ENCODE measurements at regions of chrX and their contacts with region 1.

Region 1: DNA sequence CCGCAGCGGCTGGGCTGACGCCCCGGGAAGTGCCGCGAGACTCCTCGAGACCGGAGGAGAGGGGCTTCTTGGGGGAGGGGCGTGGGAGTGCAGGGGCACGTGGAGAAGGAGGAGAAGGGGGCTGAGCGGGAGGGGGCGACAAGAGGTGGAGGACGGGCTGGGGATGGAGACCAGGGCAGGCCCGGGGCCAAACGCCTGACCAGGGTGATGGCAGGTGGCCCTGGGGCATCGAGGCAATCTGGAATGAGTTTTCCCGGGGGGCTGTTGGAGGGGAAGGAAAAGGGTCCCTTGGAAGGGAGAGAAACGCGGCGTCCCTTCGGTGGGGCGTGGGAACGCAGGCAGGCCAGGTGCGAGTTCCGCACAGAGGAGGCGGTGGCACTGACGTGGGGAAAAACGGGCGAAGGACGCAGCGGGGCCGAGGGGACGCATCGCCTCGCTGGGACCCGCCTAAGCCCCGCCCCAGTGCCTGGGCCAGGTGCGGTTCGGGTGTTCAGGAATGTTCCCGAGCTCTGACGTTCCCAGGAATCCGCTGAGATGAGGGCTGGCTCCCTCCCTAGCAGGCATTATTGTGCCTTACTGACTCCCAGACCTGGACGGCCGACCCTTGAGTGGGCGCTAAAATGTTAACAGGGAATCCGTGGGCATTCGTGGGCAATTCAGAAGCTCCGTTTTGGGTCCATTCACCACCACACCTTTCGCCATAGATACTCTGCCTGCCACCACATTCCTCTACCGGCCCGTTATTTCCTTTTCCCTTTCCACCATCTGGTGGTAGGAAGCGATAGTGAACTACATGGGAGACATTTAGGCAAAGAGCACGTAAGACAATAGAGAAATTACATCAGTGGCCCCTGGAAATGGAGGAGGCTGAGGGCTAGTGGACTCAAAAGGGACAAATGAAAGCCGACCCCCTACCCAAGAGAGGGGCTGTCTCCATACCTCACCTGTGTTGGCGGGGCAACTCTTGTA is 795 bp upstream of the SH3KBP1 start:
- DNase-seq: peak; percentile 11
- H3K4me3 Mint-ChIP-seq: peak overlapping the region; percentile 78
- H3K27ac Mint-ChIP-seq: peak overlapping the region; percentile 70
- H3K4me1 Mint-ChIP-seq: peaks cover 25% of the 10 kb centered on the region
- H3K27me3 Mint-ChIP-seq: no peaks in the 10 kb centered on the region

Region 2: DNA sequence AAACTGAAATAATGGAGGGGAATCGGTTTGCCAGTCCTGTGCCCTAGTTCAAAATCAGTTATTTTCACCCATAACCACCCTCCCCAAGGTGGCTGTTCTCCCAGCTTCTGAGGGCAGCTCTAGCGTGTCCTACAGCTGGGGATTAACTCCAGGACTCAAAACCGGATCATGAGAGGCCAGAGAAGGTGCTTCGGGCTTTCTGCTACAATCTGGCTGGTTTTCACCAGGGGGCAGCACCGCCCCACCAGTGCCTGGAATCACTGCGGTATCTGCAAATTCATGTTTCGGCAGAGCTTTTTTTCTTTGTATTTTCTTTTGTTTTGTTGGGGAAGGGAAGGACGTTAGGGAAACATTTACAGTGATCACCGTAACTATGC is 516.0 kb before region 1 on chrX:
- intact Hi-C with region 1: loop called (anchors 5 kb)
- DNase-seq: peak; percentile 34
- H3K4me3 Mint-ChIP-seq: peak overlapping the region; percentile 87
- H3K27ac Mint-ChIP-seq: peak overlapping the region; percentile 85
- H3K4me1 Mint-ChIP-seq: peaks cover 9% of the 10 kb centered on the region
- H3K27me3 Mint-ChIP-seq: peaks cover 2% of the 10 kb centered on the region

Region 3: GRCh38 chrX:19593690-19594089 is 294.5 kb before region 1 on chrX:
- intact Hi-C with region 1: loop called (anchors 1 kb)
- DNase-seq: no peak
- H3K4me3 Mint-ChIP-seq: no peak overlapping the region
- H3K27ac Mint-ChIP-seq: no peak overlapping the region
- H3K4me1 Mint-ChIP-seq: peaks cover 5% of the 10 kb centered on the region
- H3K27me3 Mint-ChIP-seq: no peaks in the 10 kb centered on the region

Region 4: DNA sequence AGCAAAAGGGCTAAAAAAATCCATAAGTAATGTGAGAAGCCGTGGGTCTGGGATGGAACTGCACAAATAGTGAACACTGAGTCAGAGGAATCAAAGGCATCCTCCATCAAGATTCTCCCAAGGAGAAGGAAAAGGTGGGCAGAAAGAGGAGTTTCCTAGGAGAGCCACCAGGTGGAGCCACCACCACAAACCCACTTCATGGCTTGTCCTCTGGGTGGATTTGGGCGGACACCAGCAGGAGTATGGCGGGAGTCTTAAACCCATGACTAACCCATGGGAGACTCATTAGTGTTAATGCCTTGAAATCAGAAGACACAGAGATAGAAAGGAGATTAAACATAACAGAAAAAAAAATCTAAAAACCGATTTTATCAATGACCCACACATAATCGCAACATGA is 148.5 kb before region 1 on chrX:
- intact Hi-C with region 1: loop called (anchors 1 kb)
- DNase-seq: no peak
- H3K4me3 Mint-ChIP-seq: no peak overlapping the region
- H3K27ac Mint-ChIP-seq: peak overlapping the region; percentile 83
- H3K4me1 Mint-ChIP-seq: peaks cover 54% of the 10 kb centered on the region
- H3K27me3 Mint-ChIP-seq: no peaks in the 10 kb centered on the region

Region 5: DNA sequence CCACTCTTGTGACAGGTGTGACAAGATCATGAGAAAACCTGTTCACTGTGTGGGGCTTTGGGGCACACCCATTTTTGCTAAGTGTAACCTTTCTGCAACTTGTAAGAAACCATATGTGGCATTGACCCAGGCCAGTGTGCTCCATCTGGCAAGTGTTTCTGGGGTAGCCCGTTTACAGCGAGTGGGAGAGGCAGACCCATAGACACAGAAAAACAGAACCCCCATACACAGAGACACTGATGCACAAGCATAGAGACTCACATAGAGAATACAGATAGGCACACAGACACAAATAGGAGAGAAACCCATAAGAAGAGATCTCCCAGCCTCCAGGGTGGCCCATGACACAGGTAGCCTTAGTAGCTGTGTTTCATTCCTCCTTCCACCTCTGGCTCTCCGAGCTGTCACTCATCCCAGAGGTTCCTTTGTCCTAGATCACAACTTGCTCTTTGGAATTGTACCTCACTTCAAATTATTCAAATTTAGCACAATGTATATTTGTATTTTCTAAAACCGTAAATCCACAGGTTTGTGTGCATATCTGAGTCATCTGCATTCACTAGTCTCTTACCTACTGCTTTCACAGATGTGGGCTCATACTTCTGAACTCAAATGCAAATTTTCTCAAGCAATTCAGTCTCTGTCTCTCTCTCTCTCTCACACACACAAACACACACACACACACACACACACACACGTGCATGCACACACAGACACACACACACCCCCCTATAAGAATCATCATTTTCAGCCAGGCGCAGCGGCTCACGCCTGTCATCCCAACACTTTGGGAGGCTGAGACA is 115.2 kb before region 1 on chrX:
- intact Hi-C with region 1: loop called (anchors 2 kb)
- DNase-seq: no peak
- H3K4me3 Mint-ChIP-seq: peak overlapping the region; percentile 68
- H3K27ac Mint-ChIP-seq: peak overlapping the region; percentile 97
- H3K4me1 Mint-ChIP-seq: peaks cover 57% of the 10 kb centered on the region
- H3K27me3 Mint-ChIP-seq: no peaks in the 10 kb centered on the region

Region 6: DNA sequence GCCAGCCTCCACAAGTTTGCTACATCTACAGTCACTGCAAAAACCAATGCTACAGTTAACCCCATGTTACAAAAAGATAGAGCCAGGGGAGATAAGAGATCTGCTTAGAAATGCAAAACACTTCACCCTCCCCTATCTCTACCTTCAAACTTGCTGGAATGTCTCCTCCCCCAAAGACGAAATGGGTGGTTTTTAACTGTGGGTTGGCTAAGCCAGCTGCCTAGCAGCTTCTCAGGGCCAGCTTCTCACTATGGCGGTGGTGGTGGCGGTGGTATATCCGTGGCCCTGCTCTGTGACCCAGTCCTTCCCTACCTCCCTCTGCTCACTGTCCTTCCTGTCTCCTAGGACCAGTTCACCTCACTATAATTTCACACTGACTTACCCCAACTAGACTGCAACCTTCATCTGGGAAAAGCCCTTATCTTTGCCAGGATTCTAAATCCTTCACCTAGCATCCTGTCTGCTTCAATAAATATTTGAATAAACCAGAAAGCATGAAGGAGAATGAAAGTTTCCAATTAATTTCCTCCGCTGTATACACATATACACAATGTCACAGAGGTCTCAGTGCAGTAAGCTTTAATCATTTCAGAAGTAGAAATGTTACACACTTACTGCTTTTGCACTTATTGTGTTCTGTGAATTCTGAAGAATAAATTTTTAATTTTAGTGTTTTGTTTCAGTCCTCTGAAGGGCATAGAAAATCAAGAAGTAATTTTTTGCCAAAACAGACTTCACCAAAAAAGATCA is 47.1 kb before region 1 on chrX:
- intact Hi-C with region 1: loop called (anchors 1 kb)
- DNase-seq: peak; percentile 37
- H3K4me3 Mint-ChIP-seq: peak overlapping the region; percentile 41
- H3K27ac Mint-ChIP-seq: peak overlapping the region; percentile 85
- H3K4me1 Mint-ChIP-seq: peaks cover 41% of the 10 kb centered on the region
- H3K27me3 Mint-ChIP-seq: no peaks in the 10 kb centered on the region

Measured in activated T-helper 1 cell treated with anti-CD3 and anti-CD28 coated beads, Interleukin-12 subunit alpha, Interleukin-12 subunit beta, Interleukin-2, Interleukin-4 antibody, amounts not matched to agents 30 ng/mL and 10 ng/mL and 1 ng/mL, durations not matched to agents 14 hours and 24 hours and 36 hours (primary cell).